ENCODE measurements at regions of chr6 and their contacts with region 1.

Region 1: DNA sequence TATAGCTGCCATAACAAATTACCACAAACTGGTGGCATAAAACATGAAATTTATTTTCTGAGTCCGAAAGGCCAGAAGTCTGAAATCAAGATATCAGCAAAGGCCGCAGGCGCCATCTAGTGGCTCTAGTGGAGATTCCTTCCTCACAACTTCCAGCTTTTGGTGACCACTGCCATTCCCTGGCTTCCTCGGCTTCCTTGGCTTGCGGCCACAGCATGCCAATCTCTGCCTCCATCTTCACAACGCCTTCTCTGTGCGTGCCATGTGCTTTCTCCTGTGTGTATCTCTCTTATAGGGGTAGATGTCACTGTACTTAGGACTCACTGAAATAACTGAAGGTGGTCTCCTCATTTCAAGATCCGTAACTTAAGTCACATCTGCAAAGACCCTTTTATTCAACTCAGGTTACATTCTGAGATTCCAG is 5.4 kb upstream of the PLAGL1 start:
- DNase-seq: peak; percentile 72 to 81
- ATAC-seq: peak in 2 of 4 donors; percentile 47 to 69
- H3K4me3 ChIP-seq: no peak overlapping the region
- H3K27ac ChIP-seq: no peak overlapping the region
- H3K4me1 ChIP-seq: no peaks in the 10 kb centered on the region
- H3K27me3 ChIP-seq: peaks cover 0 to 3% (median 0%) of the 10 kb centered on the region in 3 donors
- CTCF ChIP-seq: peak; percentile 94

Region 2: GRCh38 chr6:142900227-142900971 is 1113.1 kb before region 1 on chr6:
- intact Hi-C with region 1: no loop called
- DNase-seq: no peak
- ATAC-seq: no peak
- H3K4me3 ChIP-seq: no peak overlapping the region
- H3K27ac ChIP-seq: peak overlapping the region; percentile 30
- H3K4me1 ChIP-seq: peaks cover 72% of the 10 kb centered on the region
- H3K27me3 ChIP-seq: no peaks in the 10 kb centered on the region
- CTCF ChIP-seq: no peak

Region 3: DNA sequence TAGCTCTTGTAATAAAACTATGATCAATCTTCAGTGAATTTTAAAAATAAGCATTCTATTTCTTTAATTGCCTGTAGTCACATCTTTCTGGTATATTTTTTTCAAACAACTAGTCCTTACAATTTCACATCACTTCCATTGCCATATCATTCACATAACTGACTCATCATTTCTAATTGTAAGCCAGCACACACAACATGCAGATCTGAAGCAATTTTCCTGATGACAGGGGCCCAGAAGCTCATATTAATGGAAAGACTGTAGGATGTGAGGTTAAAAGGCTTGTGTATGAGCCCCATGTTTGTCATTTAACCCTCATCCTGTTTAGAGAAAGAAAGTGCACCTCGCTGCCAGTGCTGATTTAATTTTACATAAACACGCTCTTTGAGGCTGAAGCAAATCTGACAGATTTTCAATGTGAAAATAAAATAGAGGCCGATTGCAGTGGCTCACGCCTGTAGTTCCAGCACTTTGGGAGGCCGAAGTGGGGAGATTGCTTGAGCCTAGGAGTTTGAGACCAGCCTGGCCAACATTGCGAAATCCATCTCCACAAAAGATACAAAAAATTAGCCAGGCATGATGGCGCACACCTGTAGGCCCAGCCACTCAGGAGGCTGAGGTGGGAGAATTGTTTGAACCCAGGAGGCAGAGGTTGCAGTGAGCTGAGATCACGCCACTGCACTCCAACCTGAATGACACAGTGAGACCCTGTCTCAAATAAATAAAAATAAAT is 210.5 kb before region 1 on chr6:
- intact Hi-C with region 1: no loop called
- DNase-seq: no peak
- ATAC-seq: no peak
- H3K4me3 ChIP-seq: no peak overlapping the region
- H3K27ac ChIP-seq: no peak overlapping the region
- H3K4me1 ChIP-seq: no peaks in the 10 kb centered on the region
- H3K27me3 ChIP-seq: no peaks in the 10 kb centered on the region
- CTCF ChIP-seq: no peak

Region 4: GRCh38 chr6:143842902-143843676 is 170.4 kb before region 1 on chr6 and contains the start of gene LTV1:
- intact Hi-C with region 1: loop called in 1 of 2 experiments (anchors 5 kb)
- DNase-seq: peak; percentile 97 to 98
- ATAC-seq: peak; percentile 99 to 100 (median 100)
- H3K4me3 ChIP-seq: peak within 1 kb of the TSS; percentile 85
- H3K27ac ChIP-seq: peak within 1 kb of the TSS; percentile 86
- H3K4me1 ChIP-seq: peaks cover 15% of the 10 kb centered on the region
- H3K27me3 ChIP-seq: no peaks in the 10 kb centered on the region
- CTCF ChIP-seq: no peak
- total RNA-seq, gene LTV1: 19.1 to 36.6 (median 31.7) TPM

Region 5: GRCh38 chr6:143940011-143940597 is 73.4 kb before region 1 on chr6:
- intact Hi-C with region 1: loop called in 1 of 2 experiments (anchors 2 kb)
- DNase-seq: no peak
- ATAC-seq: no peak
- H3K4me3 ChIP-seq: no peak overlapping the region
- H3K27ac ChIP-seq: no peak overlapping the region
- H3K4me1 ChIP-seq: no peaks in the 10 kb centered on the region
- H3K27me3 ChIP-seq: no peaks in the 10 kb centered on the region
- CTCF ChIP-seq: peak; percentile 57